A549 (cell line): ENCODE measurements at regions of chr2 and their contacts with region 1.

Region 1: DNA sequence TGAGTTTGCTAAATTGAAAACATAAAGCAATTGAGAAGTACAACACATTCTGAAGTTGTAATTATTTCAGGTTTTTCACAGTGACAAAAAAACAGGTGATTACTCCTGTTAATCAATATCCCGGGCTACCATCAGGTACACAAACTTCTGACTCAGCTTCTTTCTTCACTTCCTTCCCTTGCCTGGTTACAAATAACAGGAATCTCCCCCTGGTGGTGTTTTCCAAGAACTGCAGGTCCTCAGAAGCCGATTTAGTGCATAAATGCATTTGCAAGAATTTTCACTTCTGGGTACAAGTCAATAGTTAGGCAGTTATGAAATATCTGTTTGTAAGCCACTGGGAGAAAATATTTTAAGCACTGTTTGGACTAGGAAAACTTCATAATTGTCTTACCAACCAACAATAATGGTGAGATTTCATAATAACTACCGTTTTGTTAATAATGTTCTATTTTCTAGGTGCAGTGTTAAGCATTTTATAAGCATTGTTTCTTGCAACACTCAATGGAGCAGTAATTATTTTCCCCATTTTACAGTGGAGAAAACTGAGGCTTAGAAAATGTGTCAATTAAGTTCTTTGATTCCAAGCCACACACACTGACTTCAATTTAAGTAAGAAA is 12.4 kb upstream of the GMCL1 start:
- DNase-seq: peak; percentile 78 to 93
- ATAC-seq: peak; percentile 66 to 74; a peak in 5 of 6 replicates
- H3K4me3 ChIP-seq: no peak overlapping the region
- H3K27ac ChIP-seq: peak overlapping the region; percentile 43 to 45; a peak in 5 of 6 replicates
- H3K4me1 ChIP-seq: peaks cover 27% of the 10 kb centered on the region
- CTCF ChIP-seq: peak; percentile 97
- EP300 ChIP-seq: no peak
- POLR2A ChIP-seq: no peak
- RAD21 ChIP-seq: peak; percentile 88 to 93

Region 2: GRCh38 chr2:69717861-69718273 is 99.2 kb before region 1 on chr2:
- CTCF ChIA-PET with region 1: interaction called, 407 read pairs
- POLR2A ChIA-PET with region 1: no interaction called
- DNase-seq: peak in 1 of 2 experiments; percentile 37
- ATAC-seq: peak in 1 of 2 experiments; percentile 27; a peak in 3 of 6 replicates
- H3K4me3 ChIP-seq: no peak overlapping the region
- H3K27ac ChIP-seq: peak overlapping the region in 1 of 2 experiments; percentile 77; a peak in 3 of 6 replicates
- H3K4me1 ChIP-seq: peaks cover 35% of the 10 kb centered on the region
- CTCF ChIP-seq: no peak
- EP300 ChIP-seq: 0 out of 5 replicates have a peak, but pooled peaks of 1 of the 2 experiments have one; percentile 31
- POLR2A ChIP-seq: no peak
- RAD21 ChIP-seq: no peak

Region 3: GRCh38 chr2:69741619-69742466 is 75.2 kb before region 1 on chr2 and contains the start of gene ANXA4:
- CTCF ChIA-PET with region 1: interaction called, 140 read pairs
- POLR2A ChIA-PET with region 1: interaction called, 19 read pairs
- DNase-seq: peak; percentile 91 to 93
- ATAC-seq: peak; percentile 88 to 94
- H3K4me3 ChIP-seq: peak within 1 kb of the TSS; percentile 76
- H3K27ac ChIP-seq: peak within 1 kb of the TSS; percentile 90 to 99
- H3K4me1 ChIP-seq: peaks cover 58% of the 10 kb centered on the region
- CTCF ChIP-seq: no peak
- EP300 ChIP-seq: peak in 1 of 2 experiments; percentile 17; a peak in 1 of 5 replicates
- POLR2A ChIP-seq: peak; percentile 89
- RAD21 ChIP-seq: peak in 1 of 2 experiments; percentile 19; a peak in 3 of 5 replicates
- polyA plus RNA-seq, gene ANXA4: 341 and 360 TPM in 2 replicates

Region 4: DNA sequence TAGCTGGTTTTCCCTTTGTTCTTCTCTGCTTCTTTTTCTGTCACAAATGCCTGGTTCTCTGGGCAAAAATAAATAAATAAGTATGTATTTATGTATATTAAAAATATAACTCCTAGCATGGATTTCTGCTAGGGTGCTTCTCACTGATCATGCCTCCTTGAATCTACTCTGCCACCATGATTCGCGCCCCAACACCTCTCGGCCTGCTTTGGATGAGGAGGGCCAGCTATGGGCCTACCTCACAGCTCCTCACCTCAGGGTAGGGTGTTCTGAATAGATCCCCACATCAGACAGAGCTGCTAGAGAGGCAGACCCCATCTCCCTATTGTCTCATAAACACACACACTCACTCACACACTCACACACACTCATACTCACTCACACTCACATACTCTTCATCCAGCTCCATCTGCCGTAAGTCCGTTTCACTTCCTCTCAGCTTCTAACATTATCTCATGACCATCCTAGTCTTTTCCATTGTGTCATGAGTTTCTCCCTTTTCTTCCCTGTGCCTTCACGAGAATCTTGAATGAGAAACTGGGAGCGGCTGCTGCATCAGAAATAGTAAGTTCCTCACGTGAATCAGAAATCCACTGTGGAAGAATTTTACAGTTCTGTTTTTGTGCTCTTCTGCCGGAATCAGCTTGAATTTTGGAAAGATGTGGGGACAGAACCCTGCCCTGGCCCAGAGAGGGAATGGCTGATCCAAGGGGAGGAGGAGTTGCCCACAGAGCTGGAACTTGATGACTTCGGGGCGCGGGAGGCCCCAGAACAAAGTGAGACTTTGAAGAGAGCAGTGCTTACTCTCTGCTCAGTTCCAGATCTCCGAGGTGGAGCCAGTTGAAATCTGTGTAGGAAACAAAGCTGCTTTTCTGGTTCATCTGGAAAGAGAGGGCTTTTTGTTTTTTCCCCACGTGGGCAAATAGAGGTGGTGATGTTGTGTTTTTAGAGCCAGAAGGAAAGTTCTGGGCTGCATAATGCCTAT is 54.2 kb before region 1 on chr2:
- CTCF ChIA-PET with region 1: interaction called, 31 read pairs
- POLR2A ChIA-PET with region 1: interaction called, 3 read pairs
- DNase-seq: no peak
- ATAC-seq: no peak; a peak in 1 of 6 replicates
- H3K4me3 ChIP-seq: no peak overlapping the region
- H3K27ac ChIP-seq: peak overlapping the region; percentile 22 to 62; a peak in 5 of 6 replicates
- H3K4me1 ChIP-seq: peaks cover 88% of the 10 kb centered on the region
- CTCF ChIP-seq: no peak
- EP300 ChIP-seq: no peak
- POLR2A ChIP-seq: no peak
- RAD21 ChIP-seq: no peak

Region 5: GRCh38 chr2:69781321-69782248 is 35.4 kb before region 1 on chr2:
- CTCF ChIA-PET with region 1: interaction called, 49 read pairs
- POLR2A ChIA-PET with region 1: no interaction called
- DNase-seq: peak; percentile 67 to 91
- ATAC-seq: peak; percentile 58 to 65
- H3K4me3 ChIP-seq: peak overlapping the region; percentile 7; the same call in 1 of the 3 replicates
- H3K27ac ChIP-seq: peak overlapping the region; percentile 90 to 93
- H3K4me1 ChIP-seq: peaks cover 91% of the 10 kb centered on the region
- CTCF ChIP-seq: no peak
- EP300 ChIP-seq: peak; percentile 96 to 98
- POLR2A ChIP-seq: no peak
- RAD21 ChIP-seq: peak in 1 of 2 experiments; percentile 50; a peak in 2 of 5 replicates

Region 6: DNA sequence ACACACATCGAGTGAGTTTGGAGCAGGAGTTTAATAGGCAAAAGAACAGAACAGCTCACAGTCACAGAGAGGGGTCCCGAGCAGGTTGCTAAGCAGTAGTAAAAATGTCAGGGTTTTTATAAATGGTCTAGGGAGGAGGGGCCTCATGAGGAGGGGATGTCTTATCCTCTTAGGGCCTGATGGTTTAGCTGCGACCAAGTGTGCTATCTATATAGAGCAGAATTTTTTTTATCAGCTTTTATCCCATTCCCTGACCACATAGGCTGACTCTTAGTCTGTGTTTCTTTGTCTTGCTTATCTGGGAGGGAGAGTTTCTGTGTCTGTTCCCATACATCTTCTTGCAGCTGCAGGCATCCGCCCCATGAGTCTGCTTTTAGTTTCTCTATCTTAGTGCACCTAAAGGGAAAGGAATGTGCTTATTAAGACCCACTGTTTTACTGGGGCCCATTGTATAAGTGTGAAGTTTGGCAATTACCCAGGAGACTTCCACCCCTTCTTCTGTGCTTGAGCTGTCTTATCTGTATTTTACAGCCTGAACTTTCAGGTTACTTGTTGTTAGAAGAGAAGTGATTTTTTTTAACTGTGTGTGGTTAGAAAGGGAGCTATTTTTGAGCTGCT is 18.0 kb before region 1 on chr2:
- CTCF ChIA-PET with region 1: interaction called, 101 read pairs
- POLR2A ChIA-PET with region 1: no interaction called
- DNase-seq: no peak
- ATAC-seq: peak in 1 of 2 experiments; percentile 20; a peak in 3 of 6 replicates
- H3K4me3 ChIP-seq: no peak overlapping the region
- H3K27ac ChIP-seq: peak overlapping the region; percentile 44 to 76
- H3K4me1 ChIP-seq: peaks cover 48% of the 10 kb centered on the region
- CTCF ChIP-seq: no peak
- EP300 ChIP-seq: no peak
- POLR2A ChIP-seq: no peak
- RAD21 ChIP-seq: no peak